BJ (cell line): ENCODE measurements at regions of chr1 and their contacts with region 1.

Region 1: DNA sequence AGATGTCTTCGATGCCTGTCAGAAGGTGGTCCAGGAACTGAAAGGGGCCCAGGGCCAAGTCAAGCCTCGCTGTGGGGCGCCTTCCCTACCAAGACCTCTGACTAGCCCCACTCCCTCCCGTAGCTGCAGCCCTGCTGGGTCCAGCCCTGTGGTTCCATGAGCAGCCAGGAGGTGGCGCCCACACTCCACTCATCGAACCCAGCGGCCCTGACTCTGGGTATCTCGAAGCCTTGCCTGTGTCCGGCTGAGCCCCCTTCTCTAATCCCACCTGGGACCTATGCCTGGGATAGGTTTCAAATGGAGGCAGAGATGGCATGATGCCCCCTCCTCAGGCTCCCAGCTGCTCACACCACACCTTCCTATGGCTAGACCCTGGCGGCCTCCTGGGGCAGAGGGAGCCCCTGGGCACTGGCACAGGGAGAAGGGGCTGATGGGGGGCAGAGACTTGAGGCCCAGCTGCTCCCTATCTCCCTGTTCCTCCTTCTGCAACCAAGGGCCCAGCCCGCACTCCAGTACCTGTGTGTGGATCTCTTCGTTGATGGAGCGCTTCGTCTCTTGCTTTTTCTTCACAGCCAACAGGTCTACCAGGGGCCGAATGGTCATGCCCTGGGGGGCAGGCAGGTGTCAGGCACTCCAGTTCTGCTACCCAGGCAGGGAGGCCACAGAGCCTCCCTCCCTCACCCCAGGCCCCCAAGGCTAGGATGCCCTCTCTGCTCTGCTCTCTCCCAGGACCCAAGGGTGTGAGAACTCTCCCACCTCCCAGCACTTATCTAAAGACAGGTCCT is 52.0 kb downstream of the SLC9A1 start:
- DNase-seq: no peak
- H3K4me3 ChIP-seq: no peak overlapping the region
- H3K27me3 ChIP-seq: no peaks in the 10 kb centered on the region
- CTCF ChIP-seq: peak; percentile 94

Region 2: GRCh38 chr1:27145934-27146354 is 43.0 kb after region 1 on chr1:
- CTCF ChIA-PET with region 1: interaction called, 12 read pairs
- POLR2A ChIA-PET with region 1: no interaction called
- DNase-seq: peak; percentile 67
- H3K4me3 ChIP-seq: no peak overlapping the region
- H3K27me3 ChIP-seq: no peaks in the 10 kb centered on the region
- CTCF ChIP-seq: no peak

Region 3: GRCh38 chr1:27192039-27192529 is 89.2 kb after region 1 on chr1:
- CTCF ChIA-PET with region 1: interaction called, 35 read pairs
- POLR2A ChIA-PET with region 1: no interaction called
- DNase-seq: no peak
- H3K4me3 ChIP-seq: no peak overlapping the region
- H3K27me3 ChIP-seq: no peaks in the 10 kb centered on the region; the same call in 1 of the 2 replicates
- CTCF ChIP-seq: no peak